PC-9 (cell line): ENCODE measurements at regions of chr4 and their contacts with region 1.

Region 1: GRCh38 chr4:24584175-24584850 is at the start of gene DHX15:
- DNase-seq: peak; percentile 91 to 92
- H3K4me3 ChIP-seq: peak within 1 kb of the TSS; percentile 99
- H3K27ac ChIP-seq: peak within 1 kb of the TSS; percentile 96
- H3K4me1 ChIP-seq: peaks cover 14% of the 10 kb centered on the region
- H3K27me3 ChIP-seq: no peaks in the 10 kb centered on the region
- CTCF ChIP-seq: no peak
- total RNA-seq, gene DHX15: 134 and 157 TPM in 2 replicates

Region 2: DNA sequence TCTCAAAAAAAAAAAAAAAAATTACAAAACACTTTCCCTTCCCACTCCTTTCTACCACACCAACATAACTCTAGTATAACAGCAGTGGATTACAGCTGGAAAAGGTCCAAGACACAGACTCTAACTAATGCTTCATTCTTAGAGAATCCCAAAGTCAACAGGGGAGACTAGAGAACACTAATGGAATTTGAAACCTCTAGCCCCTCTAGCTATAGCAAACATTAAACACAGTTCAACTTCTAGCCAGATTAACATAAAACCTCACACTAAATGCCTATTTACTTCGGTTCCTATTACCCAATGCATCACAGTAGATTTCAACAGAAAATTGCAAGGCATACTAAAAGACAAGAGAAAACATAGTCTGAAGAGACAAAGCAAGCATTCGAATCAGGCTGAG is 10.6 kb after region 1 on chr4:
- CTCF ChIA-PET with region 1: no interaction called
- POLR2A ChIA-PET with region 1: interaction called, 15 read pairs
- intact Hi-C with region 1: loop called (anchors 1 kb)
- DNase-seq: peak in 1 of 2 experiments; percentile 94
- H3K4me3 ChIP-seq: peak overlapping the region; percentile 19; the same call in 1 of the 2 replicates
- H3K27ac ChIP-seq: peak overlapping the region; percentile 98
- H3K4me1 ChIP-seq: peaks cover 53% of the 10 kb centered on the region
- H3K27me3 ChIP-seq: no peaks in the 10 kb centered on the region
- CTCF ChIP-seq: no peak

Region 3: DNA sequence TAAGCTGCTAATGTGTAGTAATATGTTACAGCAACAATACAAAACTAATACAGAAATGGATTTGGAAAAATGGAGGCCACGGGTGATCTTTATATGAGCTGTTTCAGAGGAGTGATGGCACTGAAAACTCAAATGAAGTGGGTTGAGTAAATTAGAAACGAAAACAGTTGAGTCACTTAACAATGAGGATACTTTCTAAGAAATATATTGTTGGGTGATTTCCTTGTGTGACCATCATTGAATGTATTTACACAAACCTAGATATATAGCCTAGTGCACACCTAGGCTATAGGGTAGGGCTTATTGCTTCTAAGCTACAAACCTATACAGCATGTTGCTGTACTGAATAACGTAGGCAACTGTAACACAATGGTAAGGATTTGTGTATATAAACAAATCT is 30.6 kb after region 1 on chr4:
- CTCF ChIA-PET with region 1: no interaction called
- POLR2A ChIA-PET with region 1: no interaction called
- intact Hi-C with region 1: no loop called
- DNase-seq: no peak
- H3K4me3 ChIP-seq: no peak overlapping the region
- H3K27ac ChIP-seq: no peak overlapping the region
- H3K4me1 ChIP-seq: no peaks in the 10 kb centered on the region
- H3K27me3 ChIP-seq: no peaks in the 10 kb centered on the region
- CTCF ChIP-seq: no peak

Region 4: GRCh38 chr4:24657768-24658617 is 73.7 kb after region 1 on chr4:
- CTCF ChIA-PET with region 1: no interaction called
- POLR2A ChIA-PET with region 1: interaction called, 9 read pairs
- intact Hi-C with region 1: loop called (anchors 1 kb)
- DNase-seq: peak; percentile 86 to 99
- H3K4me3 ChIP-seq: peak overlapping the region; percentile 45; the same call in 1 of the 2 replicates
- H3K27ac ChIP-seq: peak overlapping the region; percentile 89
- H3K4me1 ChIP-seq: peaks cover 48% of the 10 kb centered on the region
- H3K27me3 ChIP-seq: no peaks in the 10 kb centered on the region
- CTCF ChIP-seq: no peak

Region 5: DNA sequence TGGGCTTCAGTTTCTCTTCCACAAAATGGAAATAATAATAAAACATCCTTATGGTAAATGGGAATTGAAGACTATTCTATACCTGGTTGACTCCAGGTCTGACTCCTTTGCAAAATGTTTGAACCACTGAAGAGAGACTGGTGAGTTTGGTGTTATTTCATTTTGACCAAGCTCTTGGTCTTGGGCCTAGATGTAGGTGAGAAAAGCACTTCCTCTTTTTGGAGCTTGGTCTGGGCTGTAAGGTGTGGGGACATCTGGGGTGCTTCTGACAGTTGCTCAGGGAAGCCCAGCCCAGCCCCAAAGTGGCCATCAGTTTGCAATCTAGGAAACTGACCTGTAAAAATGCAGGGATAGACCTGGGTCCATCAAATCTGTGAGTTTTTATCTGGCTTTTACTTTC is 184.3 kb after region 1 on chr4:
- CTCF ChIA-PET with region 1: no interaction called
- POLR2A ChIA-PET with region 1: no interaction called
- intact Hi-C with region 1: loop called (anchors 5 kb)
- DNase-seq: no peak
- H3K4me3 ChIP-seq: no peak overlapping the region
- H3K27ac ChIP-seq: no peak overlapping the region
- H3K4me1 ChIP-seq: peaks cover 21% of the 10 kb centered on the region
- H3K27me3 ChIP-seq: no peaks in the 10 kb centered on the region
- CTCF ChIP-seq: no peak

Region 6: DNA sequence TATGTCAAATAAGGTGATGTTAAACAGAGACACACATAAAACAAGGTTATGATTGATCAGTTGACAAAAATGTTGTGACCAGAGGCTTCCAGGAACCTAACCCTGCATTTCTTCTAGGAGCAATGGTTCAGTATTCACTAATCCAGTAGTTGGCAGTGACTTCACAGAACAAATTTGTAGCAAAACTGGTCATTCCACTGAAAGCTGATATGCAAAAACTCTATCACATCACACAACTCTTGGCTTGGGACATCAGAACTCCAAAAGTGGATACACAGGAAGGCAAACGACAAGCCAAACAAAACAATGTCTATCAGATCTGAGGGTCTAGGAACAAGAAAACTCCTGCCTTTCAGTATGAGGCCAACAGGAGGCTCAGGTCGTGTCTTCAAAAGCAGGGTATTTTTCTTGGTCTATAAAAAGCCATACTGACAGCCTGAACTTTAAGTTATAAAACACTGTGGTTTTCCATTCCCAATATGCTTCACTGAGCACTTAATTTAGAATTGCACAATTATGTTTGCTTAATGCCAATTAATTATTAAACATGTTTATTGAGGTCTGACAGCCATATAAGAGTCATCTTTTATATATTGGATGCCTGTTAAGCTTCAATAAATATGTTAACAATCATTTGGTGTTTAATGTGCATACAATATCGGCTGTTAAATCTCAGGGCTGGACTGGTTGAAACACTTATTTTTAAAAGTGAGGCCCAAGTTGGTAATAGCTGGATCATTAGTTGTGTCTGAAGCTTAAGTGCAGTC is 256.7 kb after region 1 on chr4:
- CTCF ChIA-PET with region 1: no interaction called
- POLR2A ChIA-PET with region 1: no interaction called
- intact Hi-C with region 1: loop called (anchors 2 kb)
- DNase-seq: peak; percentile 49 to 93
- H3K4me3 ChIP-seq: no peak overlapping the region
- H3K27ac ChIP-seq: peak overlapping the region; percentile 41
- H3K4me1 ChIP-seq: peaks cover 11% of the 10 kb centered on the region
- H3K27me3 ChIP-seq: no peaks in the 10 kb centered on the region
- CTCF ChIP-seq: no peak